Heart right ventricle (tissue), 16 donors: ENCODE measurements at regions of chr7 and their contacts with region 1.

Region 1: GRCh38 chr7:2030475-2031450 is 202.0 kb downstream of the MAD1L1 start:
- DNase-seq: peak in 1 of 2 donors; percentile 7
- ATAC-seq: peak in 3 of 8 donors; percentile 26 to 45 (median 27)
- H3K4me3 ChIP-seq: no peak overlapping the region
- H3K27ac ChIP-seq: no peak overlapping the region
- H3K4me1 ChIP-seq: peaks cover 0 to 16% (median 8%) of the 10 kb centered on the region in 9 donors
- H3K27me3 ChIP-seq: no peaks in the 10 kb centered on the region
- CTCF ChIP-seq: no peak

Region 2: GRCh38 chr7:1873857-1874589 is 156.7 kb before region 1 on chr7:
- intact Hi-C with region 1: loop called in 1 of 10 experiments (anchors 1 kb)
- DNase-seq: no peak
- ATAC-seq: peak in 3 of 8 donors; percentile 9 to 41 (median 12)
- H3K4me3 ChIP-seq: no peak overlapping the region
- H3K27ac ChIP-seq: no peak overlapping the region
- H3K4me1 ChIP-seq: peaks cover 0 to 5% (median 0%) of the 10 kb centered on the region in 9 donors
- H3K27me3 ChIP-seq: no peaks in the 10 kb centered on the region
- CTCF ChIP-seq: no peak

Region 3: DNA sequence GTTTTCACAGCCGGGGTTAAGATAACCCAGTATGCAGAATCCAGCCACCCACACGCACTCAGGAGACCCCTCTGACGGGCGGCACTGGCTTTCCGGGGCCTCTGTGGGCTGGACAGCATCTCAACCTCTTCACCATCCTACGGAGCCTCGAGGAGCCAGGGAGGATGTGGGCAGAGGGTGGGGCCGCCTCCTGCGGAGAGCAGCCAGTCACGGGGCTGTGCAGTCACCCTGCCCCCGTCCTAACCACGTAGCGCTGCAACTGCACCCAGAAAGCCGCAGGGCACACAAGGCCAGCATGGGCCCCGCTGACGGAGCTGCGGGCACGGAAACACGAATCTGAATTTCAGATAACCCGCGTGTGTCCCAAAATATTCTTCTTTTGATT is 90.4 kb before region 1 on chr7:
- intact Hi-C with region 1: no loop called
- DNase-seq: peak; percentile 51 to 74
- ATAC-seq: peak in 7 of 8 donors; percentile 60 to 83 (median 69)
- H3K4me3 ChIP-seq: peak overlapping the region in 5 of 10 donors; percentile 1 to 56 (median 20)
- H3K27ac ChIP-seq: peak overlapping the region in 5 of 10 donors; percentile 6 to 91 (median 54)
- H3K4me1 ChIP-seq: peaks cover 2 to 54% (median 20%) of the 10 kb centered on the region in 9 donors
- H3K27me3 ChIP-seq: no peaks in the 10 kb centered on the region
- CTCF ChIP-seq: no peak

Region 4: DNA sequence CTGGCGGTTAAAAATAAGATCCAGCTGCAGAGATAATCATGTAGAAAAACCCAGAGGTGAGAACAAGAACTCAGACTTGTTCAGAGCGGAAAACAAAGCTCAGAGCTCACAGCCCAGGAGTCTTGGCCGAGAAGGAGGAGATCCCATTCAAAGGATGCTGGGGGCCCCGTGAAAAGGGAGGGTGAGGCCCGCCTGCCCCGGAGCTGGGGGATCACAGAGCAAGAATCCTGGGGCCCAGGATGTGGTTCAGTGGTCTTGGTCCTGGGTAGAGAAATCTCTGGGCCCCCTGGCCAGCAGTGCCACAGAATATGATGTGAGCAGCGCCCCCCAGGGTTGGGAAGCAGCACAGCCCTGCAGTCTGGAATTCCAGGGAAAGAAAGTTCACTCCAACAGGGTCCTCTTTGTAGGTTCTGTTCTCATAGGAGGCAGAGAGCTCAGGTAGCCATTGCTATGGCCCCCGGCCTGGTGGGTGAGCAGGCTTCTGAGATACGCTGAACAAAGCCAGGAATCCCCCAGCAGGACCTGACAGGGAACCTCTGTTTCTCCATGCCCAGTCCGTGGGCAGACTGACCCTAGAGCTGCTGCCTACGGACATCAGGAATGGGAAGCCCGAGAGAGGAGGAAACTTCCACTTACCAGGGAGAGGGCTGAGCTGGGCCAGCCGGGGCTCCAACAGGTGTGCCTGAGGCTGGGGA is 891.0 kb after region 1 on chr7:
- intact Hi-C with region 1: no loop called
- DNase-seq: no peak
- ATAC-seq: no peak
- H3K4me3 ChIP-seq: no peak overlapping the region
- H3K27ac ChIP-seq: no peak overlapping the region
- H3K4me1 ChIP-seq: peaks cover 0 to 12% (median 0%) of the 10 kb centered on the region in 9 donors
- H3K27me3 ChIP-seq: peaks cover 0 to 53% (median 15%) of the 10 kb centered on the region in 7 donors
- CTCF ChIP-seq: peak in 6 of 9 donors; percentile 13 to 41 (median 22)